Activated naive CD4-positive, alpha-beta T cell treated with anti-CD3 and anti-CD28 coated beads for 36 hours (primary cell): ENCODE measurements at regions of chr6 and their contacts with region 1.

Region 1: DNA sequence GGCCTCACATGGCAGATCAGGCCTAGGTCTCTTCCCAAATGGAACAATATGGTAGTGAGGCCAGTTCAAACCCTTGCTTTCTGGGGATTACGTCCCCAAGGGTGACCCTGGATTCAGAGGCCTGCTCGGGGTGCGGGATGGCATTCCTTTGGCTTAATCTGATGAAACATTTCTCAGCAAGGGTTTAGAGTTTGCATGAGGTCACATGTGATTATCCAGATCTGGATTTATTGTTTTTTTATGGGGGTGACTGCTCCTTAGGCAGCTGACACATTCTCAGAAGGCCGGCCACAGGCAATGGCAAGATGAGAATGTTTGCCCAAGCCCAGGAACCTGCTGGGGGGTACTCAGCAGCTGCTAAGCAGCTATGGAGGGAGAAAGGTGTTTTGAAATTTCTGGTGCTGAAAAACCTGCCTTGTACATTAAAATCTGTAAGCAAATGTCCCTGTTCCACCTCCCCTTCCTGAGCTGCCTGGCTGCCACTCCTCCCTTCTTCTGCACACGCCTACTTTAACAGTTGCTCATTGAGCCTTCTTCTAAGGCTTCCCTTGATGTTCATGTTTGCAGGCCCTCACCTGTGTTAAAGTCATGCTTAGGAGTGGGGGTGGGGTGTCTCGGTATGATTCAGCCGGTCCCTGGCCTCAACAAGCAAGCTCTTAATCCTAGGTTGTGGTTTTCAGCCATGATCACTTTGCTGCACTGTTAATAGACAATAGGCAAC is 37.9 kb upstream of the FUCA2 start:
- DNase-seq: peak; percentile 71
- H3K4me3 Mint-ChIP-seq: no peak overlapping the region
- H3K27ac Mint-ChIP-seq: no peak overlapping the region
- H3K4me1 Mint-ChIP-seq: peaks cover 57% of the 10 kb centered on the region
- H3K27me3 Mint-ChIP-seq: no peaks in the 10 kb centered on the region

Region 2: GRCh38 chr6:143536865-143537691 is 12.3 kb before region 1 on chr6:
- CTCF ChIA-PET with region 1: no interaction called
- intact Hi-C with region 1: loop called (anchors 1 kb)
- DNase-seq: peak; percentile 71
- H3K4me3 Mint-ChIP-seq: peak overlapping the region; percentile 76
- H3K27ac Mint-ChIP-seq: peak overlapping the region; percentile 15
- H3K4me1 Mint-ChIP-seq: peaks cover 35% of the 10 kb centered on the region
- H3K27me3 Mint-ChIP-seq: no peaks in the 10 kb centered on the region

Region 3: DNA sequence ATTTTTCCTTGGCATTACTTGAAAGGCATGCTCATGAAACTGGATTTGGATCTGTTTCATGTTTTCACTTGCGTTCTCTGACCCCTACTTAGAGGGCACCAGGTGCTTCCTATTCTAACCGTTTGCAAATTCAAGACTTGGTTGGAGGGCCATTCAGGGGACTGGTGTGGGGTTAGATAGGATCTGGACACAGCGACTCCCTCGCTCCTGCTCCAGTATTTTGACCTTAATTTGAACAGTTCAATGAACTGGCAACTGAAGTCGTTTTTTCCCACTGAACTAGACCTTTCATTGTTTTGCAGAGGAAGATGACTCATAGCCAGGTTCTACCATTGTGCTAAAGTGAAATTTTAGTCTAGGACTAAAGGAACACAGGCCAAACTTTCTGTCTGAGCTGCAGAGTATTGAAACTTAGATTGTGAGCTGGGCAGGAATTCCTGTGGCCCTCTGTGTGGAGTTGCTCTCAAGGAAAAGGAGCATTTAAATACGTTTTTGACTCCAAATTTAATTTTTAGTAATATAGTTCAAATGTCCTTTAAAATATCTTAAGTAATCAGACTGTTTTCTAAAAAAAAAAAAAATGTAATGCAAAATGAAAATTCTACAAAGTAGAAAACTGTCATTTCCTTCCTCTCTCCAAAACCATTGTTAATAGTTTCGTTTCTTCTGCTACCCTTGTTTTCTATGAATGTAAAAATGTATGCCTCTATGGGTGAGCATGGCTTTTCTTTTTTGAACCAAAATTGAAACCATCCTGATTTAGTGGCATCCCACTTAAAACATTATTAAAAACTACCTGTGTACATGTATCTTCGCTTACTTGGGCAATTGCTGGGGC is 800.5 kb after region 1 on chr6:
- CTCF ChIA-PET with region 1: no interaction called
- intact Hi-C with region 1: loop called (anchors 5 kb)
- DNase-seq: no peak
- H3K4me3 Mint-ChIP-seq: peak overlapping the region; percentile 65
- H3K27ac Mint-ChIP-seq: peak overlapping the region; percentile 85
- H3K4me1 Mint-ChIP-seq: peaks cover 88% of the 10 kb centered on the region
- H3K27me3 Mint-ChIP-seq: no peaks in the 10 kb centered on the region